ENCODE measurements at regions of chr10 and their contacts with region 1.

Region 1: DNA sequence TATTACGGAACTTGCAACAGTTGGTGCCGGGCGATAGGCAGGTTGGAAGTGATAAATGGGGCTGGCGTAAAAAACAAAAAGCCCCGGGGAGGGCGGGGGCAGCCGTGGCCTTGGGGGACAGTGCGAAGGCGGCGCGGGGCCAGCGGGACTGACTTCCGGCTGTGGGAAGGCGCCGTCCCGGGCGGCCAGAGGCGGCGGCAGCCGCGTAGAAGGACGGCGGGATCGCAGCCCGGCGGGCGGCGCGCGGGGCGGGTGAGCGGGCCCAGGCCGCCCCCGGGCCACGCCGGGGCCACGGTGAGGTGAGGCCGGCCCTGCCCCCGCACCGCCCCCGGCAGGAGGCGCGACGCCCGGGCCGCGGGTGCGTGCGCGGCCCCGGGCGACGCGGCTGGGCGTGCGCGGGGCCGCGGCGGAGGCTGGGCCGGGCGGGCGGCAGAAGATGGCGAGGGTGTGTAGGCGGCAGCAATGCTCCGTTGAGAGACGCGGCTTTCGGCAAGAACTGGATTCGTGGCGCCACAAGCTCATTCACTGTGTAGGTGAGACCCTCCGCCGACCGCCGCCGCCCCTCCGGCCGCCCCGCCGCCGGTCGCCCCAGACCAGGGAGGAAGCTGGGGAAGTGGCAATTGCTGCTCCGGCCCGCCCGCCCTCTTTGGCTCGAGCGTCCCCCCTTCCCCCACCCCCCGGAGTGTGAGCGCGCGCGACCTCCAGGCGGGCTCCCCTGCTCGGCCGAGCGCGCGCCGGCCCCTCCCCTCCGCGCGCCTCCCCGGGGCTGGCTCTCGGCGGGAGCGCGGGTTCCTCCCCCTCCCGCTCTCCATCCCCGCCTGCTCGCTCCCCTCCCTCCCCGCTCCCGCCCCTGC is at the start of gene LCOR:
- DNase-seq: peak; percentile 87 to 93 (median 92)
- H3K4me3 ChIP-seq: peak within 1 kb of the TSS; percentile 55 to 98 (median 82)
- H3K27ac ChIP-seq: peak within 1 kb of the TSS; percentile 83 to 97 (median 92)
- H3K4me1 ChIP-seq: peaks cover 29 to 36% of the 10 kb centered on the region in 2 donors
- H3K27me3 ChIP-seq: no peaks in the 10 kb centered on the region
- CTCF ChIP-seq: peak in 1 of 6 experiments; percentile 29
- POLR2A ChIP-seq: peak; percentile 49 to 61
- total RNA-seq, gene LCOR: 9.2 to 38.4 (median 22.4) TPM

Region 2: DNA sequence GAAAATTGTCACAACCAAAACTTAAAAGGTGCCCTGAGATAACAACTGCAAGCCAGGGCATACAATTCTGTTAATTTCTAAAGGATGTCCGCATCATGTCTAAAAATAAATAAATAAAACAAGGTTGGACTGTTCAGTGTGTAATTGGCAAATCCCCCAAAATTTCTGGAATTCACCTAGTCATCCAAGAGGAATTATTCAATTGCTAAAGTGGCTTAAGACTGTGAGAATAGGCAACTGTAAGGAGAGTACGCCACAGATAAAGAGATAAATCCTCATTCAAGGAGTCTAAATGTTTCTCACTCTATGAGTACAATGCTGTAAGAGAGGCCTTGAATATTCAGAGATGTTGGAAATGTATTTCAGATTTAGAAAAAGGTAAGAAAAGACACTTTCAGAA is 149.0 kb before region 1 on chr10:
- intact Hi-C with region 1: no loop called
- DNase-seq: no peak
- H3K4me3 ChIP-seq: no peak overlapping the region
- H3K27ac ChIP-seq: no peak overlapping the region
- H3K4me1 ChIP-seq: no peaks in the 10 kb centered on the region
- H3K27me3 ChIP-seq: no peaks in the 10 kb centered on the region
- CTCF ChIP-seq: no peak
- POLR2A ChIP-seq: no peak

Region 3: DNA sequence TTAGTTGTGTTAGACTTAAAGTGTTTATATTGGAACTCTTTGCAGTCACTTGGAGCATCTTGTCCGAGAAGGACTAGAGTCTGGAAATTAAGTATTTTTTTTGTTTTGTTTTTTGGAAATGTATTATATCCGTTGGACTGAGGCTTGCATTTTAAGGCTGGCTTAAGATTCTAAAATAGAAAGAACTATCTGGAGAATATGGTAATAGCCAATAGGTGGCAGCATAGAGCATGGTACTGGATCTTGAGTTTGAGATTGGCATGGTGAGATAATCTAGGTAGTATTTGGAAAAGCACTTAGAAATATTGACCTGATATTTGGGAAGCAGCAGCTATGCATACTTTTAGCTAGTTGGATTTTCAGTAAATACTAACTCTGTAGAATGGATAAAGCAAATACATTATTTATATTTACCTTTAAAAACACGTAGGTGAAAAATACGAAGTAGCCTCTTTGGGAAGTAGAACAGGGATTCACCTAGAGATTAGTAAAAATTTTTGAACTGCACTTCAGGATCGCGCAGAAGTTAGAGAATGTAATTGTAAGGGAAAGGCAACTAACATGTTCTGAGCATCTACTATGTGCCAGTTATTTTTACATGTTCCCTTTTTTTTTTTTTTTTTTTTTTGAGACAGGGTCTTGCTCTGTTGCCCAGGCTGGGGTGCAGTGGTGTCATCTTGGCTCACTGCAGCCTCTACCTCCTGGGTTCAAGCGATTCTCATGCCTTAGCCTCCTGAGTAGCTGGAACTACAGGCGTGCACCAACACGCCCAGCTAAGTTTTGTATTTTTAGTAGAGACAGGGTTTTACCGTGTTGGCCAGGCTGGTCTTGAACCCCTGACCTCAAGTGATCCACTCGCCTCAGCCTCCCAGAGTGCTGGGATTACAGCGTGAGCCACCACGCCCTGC is 78.6 kb after region 1 on chr10:
- intact Hi-C with region 1: loop called in 1 of 2 experiments (anchors 10 kb)
- DNase-seq: no peak
- H3K4me3 ChIP-seq: no peak overlapping the region
- H3K27ac ChIP-seq: no peak overlapping the region
- H3K4me1 ChIP-seq: peaks cover 0 to 8% of the 10 kb centered on the region in 2 donors
- H3K27me3 ChIP-seq: no peaks in the 10 kb centered on the region
- CTCF ChIP-seq: peak; percentile 35 to 59 (median 55)
- POLR2A ChIP-seq: no peak

Region 4: DNA sequence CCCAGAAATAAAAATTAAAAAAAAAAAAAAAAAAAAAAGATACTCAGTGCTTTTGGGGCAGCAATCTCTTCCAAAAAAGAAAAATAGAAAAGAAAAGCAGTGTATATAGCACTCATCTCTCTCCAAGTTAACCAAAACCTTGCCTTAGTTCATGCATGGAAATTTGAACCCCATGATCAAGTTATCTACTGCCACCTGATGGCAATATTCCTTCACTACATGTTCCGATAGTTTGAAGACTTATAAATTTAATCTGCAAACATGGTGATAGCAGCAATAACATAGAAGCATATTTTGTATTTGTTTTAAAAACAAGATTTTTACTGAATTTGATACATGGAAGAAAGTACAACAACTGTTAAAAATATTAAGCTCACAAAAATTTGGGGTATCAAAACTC is 402.3 kb after region 1 on chr10:
- intact Hi-C with region 1: no loop called
- DNase-seq: no peak
- H3K4me3 ChIP-seq: no peak overlapping the region
- H3K27ac ChIP-seq: no peak overlapping the region
- H3K4me1 ChIP-seq: no peaks in the 10 kb centered on the region
- H3K27me3 ChIP-seq: no peaks in the 10 kb centered on the region
- CTCF ChIP-seq: peak; percentile 35 to 67 (median 57)
- POLR2A ChIP-seq: no peak

Measured in adrenal gland (tissue), 19 donors.